ENCODE measurements at regions of chr19 and their contacts with region 1.

Region 1: GRCh38 chr19:45405435-45406225 is 761 bp upstream of the PPP1R13L start:
- DNase-seq: peak; percentile 95
- H3K4me3 ChIP-seq: peak overlapping the region; percentile 90 to 92 (median 91)
- H3K27ac ChIP-seq: peak overlapping the region; percentile 94
- H3K4me1 ChIP-seq: peaks cover 26% of the 10 kb centered on the region
- H3K27me3 ChIP-seq: no peaks in the 10 kb centered on the region
- CTCF ChIP-seq: no peak

Region 2: DNA sequence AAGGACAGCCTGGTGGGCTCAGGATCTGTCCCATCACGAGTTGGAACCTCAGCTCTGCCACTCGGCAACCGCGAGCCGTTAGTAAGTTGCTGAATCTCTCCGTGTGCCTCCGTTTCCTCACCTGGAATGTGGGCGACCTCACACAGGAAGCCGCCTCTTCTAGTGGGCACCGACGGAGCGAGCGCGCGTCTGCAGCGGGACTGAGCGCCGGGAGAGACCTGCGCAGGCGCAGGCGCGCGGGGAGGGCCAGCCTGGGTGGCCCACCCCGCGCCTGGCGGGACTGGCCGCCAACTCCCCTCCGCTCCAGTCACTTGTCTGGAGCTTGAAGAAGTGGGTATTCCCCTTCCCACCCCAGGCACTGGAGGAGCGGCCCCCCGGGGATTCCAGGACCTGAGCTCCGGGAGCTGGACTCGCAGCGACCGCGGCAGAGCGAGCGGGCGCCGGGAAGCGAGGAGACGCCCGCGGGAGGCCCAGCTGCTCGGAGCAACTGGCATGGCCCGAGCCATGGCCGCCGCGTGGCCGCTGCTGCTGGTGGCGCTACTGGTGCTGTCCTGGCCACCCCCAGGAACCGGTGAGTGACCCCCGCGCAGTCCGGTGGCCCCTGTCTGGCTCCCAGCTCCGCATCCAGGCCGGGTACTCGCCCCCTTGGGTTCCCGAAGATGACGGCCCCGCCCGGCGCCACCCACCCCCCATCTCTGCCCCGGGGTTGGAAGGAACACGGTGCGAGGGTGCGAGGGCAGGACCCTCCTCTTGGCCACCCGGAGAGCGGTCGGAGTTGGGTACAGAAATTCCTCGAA is 761.8 kb before region 1 on chr19 and contains the start of gene PVR:
- CTCF ChIA-PET with region 1: interaction called, 15 read pairs
- dilution Hi-C with region 1: no loop called
- in situ Hi-C with region 1: no loop called
- intact Hi-C with region 1: no loop called
- DNase-seq: peak; percentile 79
- H3K4me3 ChIP-seq: peak within 1 kb of the TSS; percentile 73 to 94 (median 81)
- H3K27ac ChIP-seq: peak within 1 kb of the TSS; percentile 75
- H3K4me1 ChIP-seq: peaks cover 7% of the 10 kb centered on the region
- H3K27me3 ChIP-seq: no peaks in the 10 kb centered on the region
- CTCF ChIP-seq: no peak
- total RNA-seq, gene PVR: 85.9 to 120 TPM

Region 3: DNA sequence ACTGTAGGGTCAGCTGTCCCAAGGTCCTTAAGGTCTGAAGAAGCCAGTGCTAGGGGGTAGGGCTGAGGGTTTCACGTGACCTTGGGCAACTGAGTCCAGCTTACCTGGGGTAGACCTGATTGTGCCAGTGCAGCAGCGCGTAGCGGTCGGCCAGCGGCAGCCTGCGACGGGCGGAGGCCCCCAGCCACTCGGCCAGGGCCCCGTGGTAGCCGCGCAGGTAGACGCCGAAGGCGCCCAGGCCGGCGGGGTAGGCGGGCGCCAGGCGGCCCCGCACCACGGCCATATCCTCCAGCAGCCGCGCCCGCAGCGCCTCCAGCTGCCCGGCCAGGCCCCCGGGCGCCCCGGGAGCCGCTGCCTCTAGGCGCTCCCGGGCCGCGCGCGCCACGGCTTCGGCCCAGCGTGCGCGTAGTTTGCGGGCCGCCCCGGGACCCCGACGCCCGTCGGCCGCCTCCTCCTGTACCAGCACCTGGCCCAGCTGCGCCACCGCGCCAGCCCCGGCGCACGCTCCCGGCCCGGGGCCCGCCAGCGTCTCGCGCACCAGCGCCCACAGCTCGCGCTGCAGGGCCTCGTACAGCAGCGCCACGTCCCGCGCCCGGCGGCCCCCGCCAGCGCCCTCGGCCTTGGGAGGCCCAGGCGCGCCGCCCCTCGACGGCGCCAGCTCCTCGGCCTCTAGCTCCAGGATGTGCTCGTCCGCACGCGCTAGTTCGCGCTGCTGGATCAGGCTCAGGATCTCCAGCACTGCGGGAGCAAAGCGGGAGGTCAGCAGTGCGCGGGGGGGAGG is 171.4 kb before region 1 on chr19:
- CTCF ChIA-PET with region 1: no interaction called
- dilution Hi-C with region 1: loop called (anchors 10 kb)
- in situ Hi-C with region 1: no loop called
- intact Hi-C with region 1: no loop called
- DNase-seq: no peak
- H3K4me3 ChIP-seq: no peak overlapping the region
- H3K27ac ChIP-seq: no peak overlapping the region
- H3K4me1 ChIP-seq: peaks cover 18% of the 10 kb centered on the region
- H3K27me3 ChIP-seq: no peaks in the 10 kb centered on the region
- CTCF ChIP-seq: no peak

Region 4: DNA sequence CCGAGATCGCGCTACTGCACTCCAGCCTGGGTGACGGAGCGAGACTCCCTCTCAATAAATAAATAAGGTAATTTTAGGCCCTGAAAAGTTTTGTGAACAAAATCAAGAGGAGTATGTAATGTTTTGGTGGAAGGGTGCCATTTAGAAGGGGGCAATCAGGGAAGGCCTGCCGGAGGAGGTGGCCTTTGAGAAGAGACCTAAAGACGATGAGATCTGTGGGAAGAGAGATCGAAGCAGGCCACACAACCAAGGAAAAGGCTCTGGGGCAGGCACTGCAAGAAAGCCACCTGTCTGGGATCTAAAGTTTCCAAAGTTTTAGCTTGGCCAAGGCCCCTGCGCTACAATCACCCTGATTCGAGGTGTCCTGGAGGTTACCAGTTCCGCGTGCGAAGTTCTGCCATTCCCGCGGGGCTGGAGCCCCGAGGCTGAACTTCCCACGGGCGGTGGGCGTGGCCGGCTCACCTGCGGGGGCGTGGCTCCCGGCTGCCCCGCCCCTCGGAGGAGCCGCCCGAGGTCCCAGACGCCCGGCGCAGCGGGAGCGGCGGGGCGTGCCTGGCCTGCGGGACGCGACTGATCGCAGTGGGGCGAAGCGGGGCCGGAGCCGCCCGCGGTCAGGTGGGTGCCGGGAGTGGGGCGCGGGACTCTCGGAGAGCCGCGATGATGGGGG is 65.3 kb before region 1 on chr19 and contains the start of gene KLC3:
- CTCF ChIA-PET with region 1: no interaction called
- dilution Hi-C with region 1: loop called (anchors 10 kb)
- in situ Hi-C with region 1: no loop called
- intact Hi-C with region 1: loop called (anchors 2 kb)
- DNase-seq: peak; percentile 53
- H3K4me3 ChIP-seq: peak within 1 kb of the TSS; percentile 59 to 88 (median 72)
- H3K27ac ChIP-seq: peak within 1 kb of the TSS; percentile 38
- H3K4me1 ChIP-seq: peaks cover 22% of the 10 kb centered on the region
- H3K27me3 ChIP-seq: no peaks in the 10 kb centered on the region
- CTCF ChIP-seq: no peak
- total RNA-seq, gene KLC3: 39.3 to 56.5 TPM

Region 5: GRCh38 chr19:45423589-45424190 is 18.1 kb after region 1 on chr19 and contains the start of gene ERCC1:
- CTCF ChIA-PET with region 1: interaction called, 3 read pairs
- dilution Hi-C with region 1: no loop called
- in situ Hi-C with region 1: no loop called
- intact Hi-C with region 1: loop called (anchors 1 kb)
- DNase-seq: peak; percentile 99
- H3K4me3 ChIP-seq: peak within 1 kb of the TSS; percentile 50 to 95 (median 66)
- H3K27ac ChIP-seq: peak within 1 kb of the TSS; percentile 100
- H3K4me1 ChIP-seq: peaks cover 45% of the 10 kb centered on the region
- H3K27me3 ChIP-seq: no peaks in the 10 kb centered on the region
- CTCF ChIP-seq: no peak
- total RNA-seq, gene ERCC1: 81.9 to 316 TPM

Region 6: DNA sequence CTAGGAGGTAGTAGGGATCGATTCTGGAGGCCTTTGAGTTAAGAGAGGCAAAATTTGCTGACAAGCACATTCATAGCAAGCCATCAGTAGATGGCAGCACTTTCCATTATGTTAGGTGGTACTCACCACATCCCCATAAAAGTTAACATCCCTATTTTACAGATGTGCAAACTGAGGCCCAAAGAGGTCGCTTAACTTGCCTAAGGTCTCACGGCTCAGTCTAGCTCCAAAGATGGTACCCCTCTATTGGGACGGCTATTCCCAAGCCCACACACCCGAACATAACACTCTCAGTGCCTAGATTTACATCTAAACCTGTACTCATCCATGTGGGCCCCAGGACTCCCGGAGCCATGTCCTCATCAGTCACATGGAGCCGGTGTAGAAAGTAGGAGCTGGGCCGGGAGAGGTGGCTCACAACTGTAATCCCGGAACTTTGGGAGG is 40.7 kb after region 1 on chr19:
- CTCF ChIA-PET with region 1: interaction called, 18 read pairs
- dilution Hi-C with region 1: no loop called
- in situ Hi-C with region 1: no loop called
- intact Hi-C with region 1: no loop called
- DNase-seq: peak; percentile 38
- H3K4me3 ChIP-seq: no peak overlapping the region
- H3K27ac ChIP-seq: peak overlapping the region; percentile 97
- H3K4me1 ChIP-seq: peaks cover 56% of the 10 kb centered on the region
- H3K27me3 ChIP-seq: no peaks in the 10 kb centered on the region
- CTCF ChIP-seq: peak; percentile 31 to 42

Region 7: GRCh38 chr19:45485305-45486077 is 79.9 kb after region 1 on chr19:
- CTCF ChIA-PET with region 1: interaction called, 13 read pairs
- dilution Hi-C with region 1: no loop called
- in situ Hi-C with region 1: no loop called
- intact Hi-C with region 1: no loop called
- DNase-seq: peak; percentile 88
- H3K4me3 ChIP-seq: peak overlapping the region; percentile 40 to 61 (median 44)
- H3K27ac ChIP-seq: no peak overlapping the region
- H3K4me1 ChIP-seq: no peaks in the 10 kb centered on the region
- H3K27me3 ChIP-seq: no peaks in the 10 kb centered on the region
- CTCF ChIP-seq: peak; percentile 89 to 90

Measured in mammary epithelial cell (primary cell).